ENCODE measurements at regions of chr5 and their contacts with region 1.

Region 1: DNA sequence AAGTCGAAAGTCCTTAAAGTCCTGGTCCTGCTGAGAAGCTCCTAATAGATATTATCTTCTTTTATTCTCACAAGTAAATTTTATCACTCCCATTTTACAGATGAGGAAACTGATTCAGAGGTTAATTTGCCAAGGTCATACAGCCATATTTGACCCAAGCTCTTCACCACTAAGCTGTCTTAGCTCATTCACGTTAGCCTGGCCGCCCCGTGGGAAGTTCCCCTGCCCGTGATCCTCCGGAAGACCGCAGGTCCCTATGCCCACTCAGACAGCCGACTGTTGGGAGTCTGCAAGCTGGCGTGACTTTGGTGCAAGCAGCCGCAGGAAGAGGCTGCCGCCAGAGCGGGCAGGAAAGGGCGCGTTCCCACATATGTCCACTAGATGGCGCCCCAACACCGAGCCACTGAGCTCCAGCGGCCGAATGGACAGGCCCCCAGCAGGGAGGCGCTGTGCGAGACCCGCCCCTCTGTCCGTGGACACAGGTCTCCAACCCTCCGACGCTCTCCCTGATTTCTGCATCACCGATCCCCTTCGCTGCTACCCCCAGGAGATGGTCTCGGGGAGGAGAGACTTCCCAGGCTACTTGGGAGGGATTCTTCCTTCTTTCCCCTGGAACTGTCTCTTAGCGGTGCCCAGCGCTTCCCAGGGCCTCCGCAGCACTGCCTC is 10.0 kb upstream of the ARAP3 start:
- DNase-seq: peak; percentile 95
- H3K4me3 Mint-ChIP-seq: peak overlapping the region; percentile 69
- H3K27ac Mint-ChIP-seq: no peak overlapping the region
- H3K4me1 Mint-ChIP-seq: peaks cover 35% of the 10 kb centered on the region
- H3K27me3 Mint-ChIP-seq: peaks cover 47% of the 10 kb centered on the region
- CTCF ChIP-seq: peak; percentile 97

Region 2: DNA sequence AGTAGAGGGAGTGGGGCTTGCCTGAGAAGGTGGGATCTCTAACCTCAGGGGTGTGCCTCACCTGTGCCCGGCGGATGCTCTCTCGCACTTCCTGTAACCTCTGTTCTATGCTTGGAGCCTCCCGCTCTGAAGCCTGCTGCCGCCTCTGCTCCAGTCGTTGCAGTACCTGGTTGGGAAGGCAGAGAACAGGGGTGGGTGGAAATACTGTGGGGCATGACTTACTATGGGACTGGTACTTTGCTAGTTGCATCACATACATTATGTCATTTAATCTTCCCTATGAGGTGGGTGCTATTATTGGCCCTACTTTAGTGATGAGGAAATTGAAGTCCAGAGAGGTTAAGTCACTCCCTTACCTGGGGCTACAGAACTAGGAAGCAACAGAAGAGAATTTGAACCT is 46.0 kb before region 1 on chr5:
- CTCF ChIA-PET with region 1: no interaction called
- intact Hi-C with region 1: no loop called
- DNase-seq: no peak
- H3K4me3 Mint-ChIP-seq: no peak overlapping the region
- H3K27ac Mint-ChIP-seq: no peak overlapping the region
- H3K4me1 Mint-ChIP-seq: peaks cover 18% of the 10 kb centered on the region
- H3K27me3 Mint-ChIP-seq: no peaks in the 10 kb centered on the region
- CTCF ChIP-seq: no peak

Region 3: DNA sequence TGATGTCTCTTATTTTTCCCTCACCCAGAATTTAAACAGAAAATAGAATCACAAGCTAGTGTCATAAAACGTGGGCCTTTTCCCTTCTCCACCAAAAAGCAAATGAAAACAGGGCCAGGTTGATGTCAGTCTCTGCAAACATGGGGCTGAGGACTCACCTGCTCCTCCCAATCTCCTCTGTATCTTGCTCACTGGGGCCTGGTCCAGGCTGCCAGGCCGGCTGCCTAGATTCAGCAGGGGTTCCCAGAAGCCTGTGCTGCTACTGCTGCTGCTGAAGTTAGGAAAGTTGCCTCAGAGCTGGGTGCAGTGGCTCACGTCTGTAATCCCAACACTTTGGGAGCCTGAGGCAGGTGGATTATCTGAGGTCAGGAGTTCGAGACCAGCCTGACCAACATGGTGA is 101.9 kb after region 1 on chr5:
- CTCF ChIA-PET with region 1: interaction called, 10 read pairs
- intact Hi-C with region 1: no loop called
- DNase-seq: no peak
- H3K4me3 Mint-ChIP-seq: no peak overlapping the region
- H3K27ac Mint-ChIP-seq: no peak overlapping the region
- H3K4me1 Mint-ChIP-seq: no peaks in the 10 kb centered on the region
- H3K27me3 Mint-ChIP-seq: peaks cover 17% of the 10 kb centered on the region
- CTCF ChIP-seq: no peak

Region 4: GRCh38 chr5:141968914-141969608 is 277.1 kb after region 1 on chr5 and contains the start of gene RNF14:
- CTCF ChIA-PET with region 1: interaction called, 15 read pairs
- intact Hi-C with region 1: no loop called
- DNase-seq: peak; percentile 97
- H3K4me3 Mint-ChIP-seq: peak within 1 kb of the TSS; percentile 99
- H3K27ac Mint-ChIP-seq: peak within 1 kb of the TSS; percentile 93
- H3K4me1 Mint-ChIP-seq: peaks cover 35% of the 10 kb centered on the region
- H3K27me3 Mint-ChIP-seq: no peaks in the 10 kb centered on the region
- CTCF ChIP-seq: peak; percentile 98
- total RNA-seq, gene RNF14: 32.2 and 43.3 TPM in 2 replicates

Measured in Calu3 (cell line).